A673 (cell line): ENCODE measurements at regions of chr18 and their contacts with region 1.

Region 1: GRCh38 chr18:40215979-40216378 is 1739.1 kb upstream of the PIK3C3 start:
- DNase-seq: no peak
- H3K4me3 ChIP-seq: no peak overlapping the region
- H3K27ac ChIP-seq: no peak overlapping the region
- H3K4me1 ChIP-seq: peaks cover 3% of the 10 kb centered on the region
- H3K27me3 ChIP-seq: no peaks in the 10 kb centered on the region
- CTCF ChIP-seq: no peak

Region 2: DNA sequence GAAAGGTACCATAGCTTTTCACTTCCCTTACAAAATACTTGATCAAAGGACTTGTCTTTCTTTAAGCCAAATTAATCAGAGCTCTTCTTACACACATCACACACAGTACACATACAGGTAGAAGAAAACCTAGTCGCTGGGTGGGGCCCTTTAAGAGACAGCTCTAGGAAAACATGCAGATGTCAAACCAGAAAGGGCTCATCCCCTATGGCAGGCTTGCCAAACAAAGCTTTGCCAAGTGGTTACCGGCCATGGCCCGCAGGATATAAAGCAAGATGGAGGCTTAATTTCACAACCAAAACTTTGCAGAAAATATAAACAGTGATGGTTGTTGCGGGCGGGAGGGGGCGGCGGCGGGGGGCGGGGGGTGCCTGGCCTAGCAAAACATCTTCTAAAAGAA is 417.0 kb before region 1 on chr18:
- CTCF ChIA-PET with region 1: no interaction called
- POLR2A ChIA-PET with region 1: interaction called, 10 read pairs
- intact Hi-C with region 1: no loop called
- DNase-seq: peak; percentile 32
- H3K4me3 ChIP-seq: peak overlapping the region; percentile 67
- H3K27ac ChIP-seq: no peak overlapping the region
- H3K4me1 ChIP-seq: no peaks in the 10 kb centered on the region
- H3K27me3 ChIP-seq: no peaks in the 10 kb centered on the region
- CTCF ChIP-seq: no peak